Activated naive CD4-positive, alpha-beta T cell treated with anti-CD3 and anti-CD28 coated beads for 36 hours (primary cell): ENCODE measurements at regions of chr16 and their contacts with region 1.

Region 1: GRCh38 chr16:68756250-68756915 is 19.3 kb downstream of the CDH1 start:
- DNase-seq: peak; percentile 93
- H3K4me3 Mint-ChIP-seq: peak overlapping the region; percentile 19
- H3K27ac Mint-ChIP-seq: peak overlapping the region; percentile 97
- H3K4me1 Mint-ChIP-seq: peaks cover 61% of the 10 kb centered on the region
- H3K27me3 Mint-ChIP-seq: no peaks in the 10 kb centered on the region

Region 2: GRCh38 chr16:68275611-68276191 is 480.7 kb before region 1 on chr16:
- CTCF ChIA-PET with region 1: no interaction called
- intact Hi-C with region 1: loop called (anchors 10 kb)
- DNase-seq: peak; percentile 78
- H3K4me3 Mint-ChIP-seq: peak overlapping the region; percentile 52
- H3K27ac Mint-ChIP-seq: peak overlapping the region; percentile 99
- H3K4me1 Mint-ChIP-seq: peaks cover 74% of the 10 kb centered on the region
- H3K27me3 Mint-ChIP-seq: no peaks in the 10 kb centered on the region

Region 3: DNA sequence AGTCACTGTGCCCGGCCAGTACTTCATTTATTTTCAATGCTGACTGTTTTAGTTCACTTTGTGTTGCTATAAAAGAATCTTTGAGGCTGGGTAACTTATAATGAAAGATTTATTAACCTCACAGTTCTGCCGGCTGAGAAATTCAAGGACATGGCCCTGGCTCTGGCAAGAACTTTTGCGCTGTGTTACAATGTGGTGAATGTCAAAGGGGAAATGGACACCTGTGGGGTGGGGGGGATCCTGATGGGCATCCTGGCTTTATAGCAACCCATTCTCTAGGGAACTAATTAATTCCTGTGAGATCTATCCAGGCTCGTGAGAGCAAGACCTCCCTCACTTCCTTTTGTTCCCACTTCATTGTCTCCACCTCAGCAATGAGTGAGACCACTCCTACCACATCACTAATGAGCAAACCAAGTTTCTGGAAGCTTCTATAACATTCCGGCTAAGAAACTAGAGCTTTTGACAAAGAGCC is 128.4 kb before region 1 on chr16:
- CTCF ChIA-PET with region 1: no interaction called
- intact Hi-C with region 1: no loop called
- DNase-seq: no peak
- H3K4me3 Mint-ChIP-seq: no peak overlapping the region
- H3K27ac Mint-ChIP-seq: no peak overlapping the region
- H3K4me1 Mint-ChIP-seq: no peaks in the 10 kb centered on the region
- H3K27me3 Mint-ChIP-seq: peaks cover 6% of the 10 kb centered on the region

Region 4: DNA sequence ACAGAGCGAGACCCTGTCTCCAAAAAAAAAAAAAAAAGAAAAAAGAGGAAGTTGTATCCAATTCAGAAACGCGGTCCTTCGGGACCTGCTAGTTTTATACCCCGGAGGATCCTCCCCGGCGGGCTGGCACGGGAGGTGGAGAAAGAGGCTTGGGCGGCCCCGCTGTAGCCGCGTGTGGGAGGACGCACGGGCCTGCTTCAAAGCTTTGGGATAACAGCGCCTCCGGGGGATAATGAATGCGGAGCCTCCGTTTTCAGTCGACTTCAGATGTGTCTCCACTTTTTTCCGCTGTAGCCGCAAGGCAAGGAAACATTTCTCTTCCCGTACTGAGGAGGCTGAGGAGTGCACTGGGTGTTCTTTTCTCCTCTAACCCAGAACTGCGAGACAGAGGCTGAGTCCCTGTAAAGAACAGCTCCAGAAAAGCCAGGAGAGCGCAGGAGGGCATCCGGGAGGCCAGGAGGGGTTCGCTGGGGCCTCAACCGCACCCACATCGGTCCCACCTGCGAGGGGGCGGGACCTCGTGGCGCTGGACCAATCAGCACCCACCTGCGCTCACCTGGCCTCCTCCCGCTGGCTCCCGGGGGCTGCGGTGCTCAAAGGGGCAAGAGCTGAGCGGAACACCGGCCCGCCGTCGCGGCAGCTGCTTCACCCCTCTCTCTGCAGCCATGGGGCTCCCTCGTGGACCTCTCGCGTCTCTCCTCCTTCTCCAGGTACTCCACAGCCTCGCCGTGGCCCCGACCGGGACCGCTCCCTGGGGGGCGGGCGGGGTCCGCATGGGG is 111.5 kb before region 1 on chr16 and contains the start of gene CDH3:
- CTCF ChIA-PET with region 1: no interaction called
- intact Hi-C with region 1: loop called (anchors 5 kb)
- DNase-seq: peak; percentile 46
- H3K4me3 Mint-ChIP-seq: peak within 1 kb of the TSS; percentile 69
- H3K27ac Mint-ChIP-seq: no peak within 1 kb of the TSS
- H3K4me1 Mint-ChIP-seq: peaks cover 31% of the 10 kb centered on the region
- H3K27me3 Mint-ChIP-seq: peaks cover 66% of the 10 kb centered on the region
- total RNA-seq, gene CDH3: 20.1 to 23.3 TPM

Region 5: GRCh38 chr16:68668266-68668665 is 88.1 kb before region 1 on chr16:
- CTCF ChIA-PET with region 1: interaction called, 9 read pairs
- intact Hi-C with region 1: loop called (anchors 1 kb)
- DNase-seq: peak; percentile 77
- H3K4me3 Mint-ChIP-seq: no peak overlapping the region
- H3K27ac Mint-ChIP-seq: peak overlapping the region; percentile 77
- H3K4me1 Mint-ChIP-seq: peaks cover 24% of the 10 kb centered on the region
- H3K27me3 Mint-ChIP-seq: peaks cover 7% of the 10 kb centered on the region

Region 6: GRCh38 chr16:68719993-68720489 is 36.3 kb before region 1 on chr16:
- CTCF ChIA-PET with region 1: interaction called, 6 read pairs
- intact Hi-C with region 1: loop called (anchors 1 kb)
- DNase-seq: peak; percentile 80
- H3K4me3 Mint-ChIP-seq: no peak overlapping the region
- H3K27ac Mint-ChIP-seq: peak overlapping the region; percentile 83
- H3K4me1 Mint-ChIP-seq: peaks cover 19% of the 10 kb centered on the region
- H3K27me3 Mint-ChIP-seq: no peaks in the 10 kb centered on the region

Region 7: GRCh38 chr16:68843482-68844210 is 87.3 kb after region 1 on chr16 and contains the start of gene TANGO6:
- CTCF ChIA-PET with region 1: no interaction called
- intact Hi-C with region 1: loop called (anchors 1 kb)
- DNase-seq: peak; percentile 95
- H3K4me3 Mint-ChIP-seq: peak within 1 kb of the TSS; percentile 96
- H3K27ac Mint-ChIP-seq: peak within 1 kb of the TSS; percentile 89
- H3K4me1 Mint-ChIP-seq: peaks cover 27% of the 10 kb centered on the region
- H3K27me3 Mint-ChIP-seq: no peaks in the 10 kb centered on the region
- total RNA-seq, gene TANGO6: 21.6 to 22.3 TPM